Transverse colon (tissue), 4 donors: ENCODE measurements at regions of chr7 and their contacts with region 1.

Region 1: DNA sequence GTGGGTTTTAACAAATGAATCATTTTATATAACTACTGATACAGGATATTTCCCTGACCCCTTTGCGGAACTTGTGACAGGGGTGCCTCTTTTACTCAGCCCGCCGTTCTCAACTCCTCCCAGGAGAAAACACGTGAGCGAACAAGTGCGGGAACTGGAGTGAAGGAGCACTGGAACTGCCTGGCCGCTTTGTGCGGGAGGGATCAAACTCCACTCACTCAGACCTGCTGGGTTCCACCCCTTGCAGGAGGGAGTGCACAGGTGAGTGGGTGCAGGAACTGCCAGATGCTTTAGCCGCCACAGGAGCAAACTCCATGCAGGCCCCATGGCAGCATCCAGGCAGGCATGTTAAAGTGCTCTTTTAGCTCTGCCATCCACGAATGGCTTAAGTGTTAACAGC is 513.4 kb upstream of the GRM3 start:
- DNase-seq: no peak
- H3K4me3 ChIP-seq: no peak overlapping the region
- H3K27ac ChIP-seq: no peak overlapping the region
- H3K4me1 ChIP-seq: no peaks in the 10 kb centered on the region
- H3K27me3 ChIP-seq: no peaks in the 10 kb centered on the region
- CTCF ChIP-seq: no peak
- EP300 ChIP-seq: no peak
- POLR2A ChIP-seq: no peak

Region 2: DNA sequence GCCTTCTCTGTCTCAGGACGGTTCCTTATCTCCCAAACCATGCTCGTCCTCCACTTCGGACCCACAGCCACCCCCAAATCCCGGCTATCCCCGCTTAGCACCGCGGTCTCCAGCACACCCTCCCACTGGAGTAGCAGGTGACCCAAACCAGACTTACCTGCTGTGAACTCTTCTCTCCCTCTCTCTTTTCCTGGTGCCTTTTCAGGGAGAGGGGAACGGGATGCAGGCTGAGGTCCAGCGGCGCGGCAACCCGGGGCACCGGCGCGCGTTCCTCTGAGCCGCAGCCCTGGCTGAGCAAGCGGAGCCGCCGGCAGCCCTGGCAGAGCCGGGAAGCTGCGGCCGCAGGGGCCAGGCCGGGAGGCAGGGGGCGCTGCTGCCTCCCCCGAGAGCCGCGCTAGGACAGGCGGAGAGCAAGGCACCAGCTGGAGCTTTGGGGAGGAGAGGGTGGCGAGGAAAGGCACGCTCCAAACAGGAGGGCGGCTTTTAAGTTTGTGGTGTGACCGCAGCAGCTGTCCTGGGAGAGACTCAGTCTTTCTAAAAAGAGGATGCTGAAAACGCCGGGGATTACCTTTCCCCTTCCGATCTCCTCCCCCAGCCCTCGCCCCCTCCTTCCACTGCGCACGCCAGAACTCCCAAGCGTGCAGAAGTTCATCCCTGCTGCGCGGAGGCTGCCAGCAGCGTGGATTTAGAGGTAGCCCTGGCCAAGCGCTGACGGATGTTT is 943.6 kb before region 1 on chr7 and contains the start of gene SEMA3D:
- in situ Hi-C with region 1: no loop called
- intact Hi-C with region 1: loop called (anchors 5 kb)
- DNase-seq: peak; percentile 53
- H3K4me3 ChIP-seq: peak within 1 kb of the TSS; percentile 31 to 62 (median 34)
- H3K27ac ChIP-seq: peak within 1 kb of the TSS; percentile 49 to 71 (median 58)
- H3K4me1 ChIP-seq: peaks cover 0 to 15% (median 7%) of the 10 kb centered on the region in 4 donors
- H3K27me3 ChIP-seq: peaks cover 42% of the 10 kb centered on the region
- CTCF ChIP-seq: peak; percentile 36 to 65 (median 61)
- EP300 ChIP-seq: no peak
- POLR2A ChIP-seq: no peak
- total RNA-seq, gene SEMA3D: 1.4 to 1.6 (median 1.5) TPM in 3 of 4 donors, not detected in the other

Region 3: GRCh38 chr7:85682833-85683620 is 447.2 kb before region 1 on chr7:
- in situ Hi-C with region 1: no loop called
- intact Hi-C with region 1: no loop called
- DNase-seq: no peak
- H3K4me3 ChIP-seq: no peak overlapping the region
- H3K27ac ChIP-seq: no peak overlapping the region
- H3K4me1 ChIP-seq: no peaks in the 10 kb centered on the region
- H3K27me3 ChIP-seq: no peaks in the 10 kb centered on the region
- CTCF ChIP-seq: no peak
- EP300 ChIP-seq: no peak
- POLR2A ChIP-seq: no peak

Region 4: GRCh38 chr7:85806321-85806720 is 323.9 kb before region 1 on chr7:
- in situ Hi-C with region 1: no loop called
- intact Hi-C with region 1: no loop called
- DNase-seq: no peak
- H3K4me3 ChIP-seq: no peak overlapping the region
- H3K27ac ChIP-seq: no peak overlapping the region
- H3K4me1 ChIP-seq: no peaks in the 10 kb centered on the region
- H3K27me3 ChIP-seq: no peaks in the 10 kb centered on the region
- CTCF ChIP-seq: peak in 2 of 5 experiments; percentile 9 to 19
- EP300 ChIP-seq: no peak
- POLR2A ChIP-seq: no peak